ENCODE measurements at regions of chr5 and their contacts with region 1.

Region 1: GRCh38 chr5:39539096-39539869 is 114.5 kb upstream of the DAB2 start:
- DNase-seq: no peak
- ATAC-seq: no peak
- H3K4me3 ChIP-seq: no peak overlapping the region
- H3K27ac ChIP-seq: no peak overlapping the region
- H3K4me1 ChIP-seq: peaks cover 0 to 8% of the 10 kb centered on the region in 2 experiments; a peak in 2 of 5 replicates
- H3K27me3 ChIP-seq: peaks cover 0 to 5% of the 10 kb centered on the region in 2 experiments; a peak in 1 of 5 replicates
- CTCF ChIP-seq: no peak
- EP300 ChIP-seq: no peak
- POLR2A ChIP-seq: no peak
- RAD21 ChIP-seq: no peak

Region 2: DNA sequence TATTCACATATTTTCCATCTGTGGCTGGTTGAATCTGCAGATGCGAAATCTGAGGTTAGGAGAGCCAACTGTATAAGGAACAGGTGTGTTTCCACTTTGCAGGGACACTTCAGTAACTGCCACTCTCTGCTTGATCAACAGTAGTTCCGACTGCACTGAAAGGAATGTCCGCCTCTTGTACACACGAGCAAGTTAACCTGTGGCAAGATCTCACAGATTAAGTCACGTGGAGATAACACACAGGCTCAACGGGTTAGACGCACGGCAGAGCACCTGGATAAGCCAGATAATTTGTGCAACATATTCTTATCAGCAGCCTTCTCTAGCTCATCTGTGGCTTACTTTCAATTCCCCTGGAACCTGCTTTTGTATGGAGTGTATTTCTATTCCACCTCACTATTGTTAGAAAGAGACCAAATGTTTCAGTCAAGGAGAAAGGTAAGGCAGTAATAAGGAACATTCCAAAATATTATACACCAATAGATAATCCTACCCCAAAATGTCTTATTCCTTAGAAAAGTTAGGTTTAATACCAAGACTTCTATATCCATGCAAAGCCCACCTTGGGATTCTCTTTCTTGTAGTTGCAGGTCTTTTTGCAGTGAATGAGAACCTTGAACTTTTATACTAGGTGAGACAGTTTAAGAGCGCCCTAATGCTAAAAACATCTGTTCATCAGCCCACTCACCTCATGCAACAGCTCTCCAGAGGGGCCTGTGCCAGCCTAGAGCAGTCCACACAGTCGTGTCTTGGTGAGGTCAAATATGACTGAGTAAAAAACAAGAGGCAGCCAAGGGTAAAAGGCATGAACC is 168.5 kb before region 1 on chr5:
- CTCF ChIA-PET with region 1: no interaction called
- POLR2A ChIA-PET with region 1: no interaction called
- in situ Hi-C with region 1: loop called (anchors 5 kb)
- intact Hi-C with region 1: no loop called
- DNase-seq: no peak
- ATAC-seq: no peak
- H3K4me3 ChIP-seq: no peak overlapping the region
- H3K27ac ChIP-seq: no peak overlapping the region
- H3K4me1 ChIP-seq: 0 out of 5 replicates have a peak, but pooled peaks cover 0 to 3% of the 10 kb centered on the region in 2 experiments
- H3K27me3 ChIP-seq: no peaks in the 10 kb centered on the region
- CTCF ChIP-seq: no peak
- EP300 ChIP-seq: no peak
- POLR2A ChIP-seq: no peak
- RAD21 ChIP-seq: no peak

Region 3: DNA sequence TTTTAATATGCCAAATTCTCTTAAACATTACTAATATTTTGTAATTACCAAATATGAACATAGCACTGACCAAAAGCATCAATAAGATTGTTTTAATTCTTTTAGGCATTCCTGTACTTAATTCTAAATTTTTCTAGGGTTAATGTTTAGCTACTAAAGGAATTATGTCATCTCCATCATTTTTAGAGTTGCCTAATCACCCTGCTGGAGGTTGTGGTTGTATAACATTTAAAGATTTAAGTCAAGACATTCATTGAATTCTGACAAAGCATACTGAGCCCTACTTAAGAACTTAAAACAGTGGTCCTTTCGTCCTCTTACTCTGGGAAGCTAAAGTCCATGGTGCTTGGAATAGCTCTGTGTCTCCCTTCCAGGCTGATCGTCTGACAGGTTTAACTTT is 86.4 kb before region 1 on chr5:
- CTCF ChIA-PET with region 1: no interaction called
- POLR2A ChIA-PET with region 1: no interaction called
- in situ Hi-C with region 1: no loop called
- intact Hi-C with region 1: no loop called
- DNase-seq: no peak
- ATAC-seq: no peak
- H3K4me3 ChIP-seq: no peak overlapping the region
- H3K27ac ChIP-seq: no peak overlapping the region
- H3K4me1 ChIP-seq: no peaks in the 10 kb centered on the region
- H3K27me3 ChIP-seq: peaks cover 0 to 4% of the 10 kb centered on the region in 2 experiments; a peak in 1 of 5 replicates
- CTCF ChIP-seq: no peak
- EP300 ChIP-seq: no peak
- POLR2A ChIP-seq: no peak
- RAD21 ChIP-seq: no peak